Activated T-helper 2 cell treated with anti-CD3 and anti-CD28 coated beads, Interferon-gamma antibody, Interleukin-2, Interleukin-4, amounts not matched to agents 10 μg/mL and 5 μg/mL and 100 μg/mL, durations not matched to agents 14 hours and 24 hours and 36 hours (primary cell): ENCODE measurements at regions of chr12 and their contacts with region 1.

Region 1: GRCh38 chr12:56299853-56300643 is at the start of gene CS:
- DNase-seq: peak; percentile 98
- H3K4me3 Mint-ChIP-seq: peak within 1 kb of the TSS; percentile 95
- H3K27ac Mint-ChIP-seq: peak within 1 kb of the TSS; percentile 94
- H3K4me1 Mint-ChIP-seq: peaks cover 45% of the 10 kb centered on the region
- H3K27me3 Mint-ChIP-seq: no peaks in the 10 kb centered on the region
- total RNA-seq, gene CS: 250 and 253 TPM in 2 replicates

Region 2: DNA sequence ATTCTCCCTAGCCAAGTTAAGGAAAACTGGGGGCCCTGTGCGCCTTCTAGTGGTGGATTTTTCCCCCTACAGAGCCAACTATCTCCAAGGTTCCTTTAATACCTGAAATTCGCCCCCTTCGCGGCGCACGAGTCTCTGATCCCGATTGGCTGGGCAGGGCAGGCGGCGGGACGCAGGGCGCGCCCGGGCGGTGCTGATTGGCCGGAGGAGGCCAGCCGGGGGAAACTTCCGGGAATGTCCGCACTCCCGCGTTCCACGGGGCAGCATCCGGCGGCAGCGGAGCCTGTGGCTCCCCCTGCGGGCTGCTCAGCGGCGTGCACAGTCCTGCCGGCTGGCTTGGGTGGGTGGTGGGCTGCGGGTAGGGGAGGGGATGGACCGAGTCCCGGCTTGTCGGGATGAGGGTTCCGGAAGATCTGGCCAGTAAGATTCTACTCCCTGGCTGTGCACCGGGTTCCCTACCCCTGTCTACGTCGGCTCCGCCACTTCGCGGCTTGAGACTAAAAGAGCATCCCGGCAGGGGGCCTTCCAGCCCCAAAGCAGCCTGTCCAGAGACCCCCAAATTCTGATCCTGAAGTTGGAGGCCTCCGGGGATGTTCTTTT is 75.8 kb before region 1 on chr12 and contains the start of gene NABP2:
- intact Hi-C with region 1: loop called (anchors 2 kb)
- DNase-seq: peak; percentile 94
- H3K4me3 Mint-ChIP-seq: peak within 1 kb of the TSS; percentile 99
- H3K27ac Mint-ChIP-seq: peak within 1 kb of the TSS; percentile 76
- H3K4me1 Mint-ChIP-seq: peaks cover 41% of the 10 kb centered on the region
- H3K27me3 Mint-ChIP-seq: no peaks in the 10 kb centered on the region
- total RNA-seq, gene NABP2: 77.3 and 86.8 TPM in 2 replicates

Region 3: DNA sequence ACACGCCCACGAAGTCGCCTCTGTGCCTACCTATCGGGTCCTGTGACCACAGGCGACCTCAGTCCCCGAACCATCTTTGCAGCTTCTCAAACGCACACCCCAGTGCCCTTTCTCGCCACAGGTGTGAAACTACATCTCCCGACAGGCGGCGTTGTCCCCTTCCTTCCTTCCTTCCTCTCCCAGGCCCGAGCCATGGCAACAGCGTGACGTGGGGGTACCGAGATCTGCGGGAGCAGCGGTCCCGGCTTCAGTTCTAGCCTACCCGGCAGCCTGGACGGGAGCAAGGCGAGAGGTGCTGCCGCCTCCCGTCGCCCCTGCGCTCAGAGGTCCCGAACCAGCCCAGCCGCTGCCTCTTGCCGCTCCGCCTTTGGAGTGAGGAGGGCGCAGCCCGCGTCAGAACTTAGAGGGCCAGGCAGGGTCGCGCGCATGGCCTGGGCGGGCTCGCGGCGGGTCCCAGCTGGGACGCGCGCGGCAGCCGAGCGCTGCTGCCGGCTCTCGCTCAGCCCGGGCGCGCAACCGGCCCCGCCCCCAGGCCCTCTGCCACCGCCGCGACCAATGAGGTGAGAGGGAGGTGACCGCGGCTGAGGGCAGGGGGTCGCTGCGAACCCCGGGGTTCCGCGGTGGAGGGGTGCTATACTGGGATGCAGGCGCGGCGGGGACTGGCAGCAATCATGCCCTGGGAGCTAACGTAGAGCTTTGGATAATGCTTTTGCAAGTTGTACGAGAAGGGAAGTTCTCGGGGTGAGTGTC is 33.2 kb before region 1 on chr12 and contains the start of gene COQ10A:
- intact Hi-C with region 1: loop called (anchors 1 kb)
- DNase-seq: peak; percentile 85
- H3K4me3 Mint-ChIP-seq: peak within 1 kb of the TSS; percentile 96
- H3K27ac Mint-ChIP-seq: peak within 1 kb of the TSS; percentile 87
- H3K4me1 Mint-ChIP-seq: peaks cover 17% of the 10 kb centered on the region
- H3K27me3 Mint-ChIP-seq: no peaks in the 10 kb centered on the region
- total RNA-seq, gene COQ10A: 15.9 and 17.0 TPM in 2 replicates

Region 4: DNA sequence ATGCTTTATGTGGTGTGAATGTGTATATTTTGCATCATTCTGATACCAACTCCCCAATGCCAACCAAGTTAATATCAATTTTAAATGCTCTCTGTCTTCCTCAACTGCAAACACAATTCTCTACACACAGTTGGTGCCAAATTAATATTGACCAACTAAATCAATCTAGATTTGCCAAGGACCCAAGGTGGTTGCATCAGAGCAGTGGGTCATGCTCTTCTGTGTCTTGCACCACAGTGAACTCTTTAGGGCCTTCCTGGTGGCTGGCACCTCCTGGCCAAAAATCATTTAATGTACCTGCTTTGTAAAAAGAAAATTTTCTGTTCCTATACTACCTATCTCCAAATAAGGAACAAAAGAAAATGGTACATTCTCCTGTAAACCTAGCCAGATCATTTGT is 19.2 kb before region 1 on chr12:
- intact Hi-C with region 1: no loop called
- DNase-seq: no peak
- H3K4me3 Mint-ChIP-seq: no peak overlapping the region
- H3K27ac Mint-ChIP-seq: no peak overlapping the region
- H3K4me1 Mint-ChIP-seq: no peaks in the 10 kb centered on the region
- H3K27me3 Mint-ChIP-seq: no peaks in the 10 kb centered on the region

Region 5: DNA sequence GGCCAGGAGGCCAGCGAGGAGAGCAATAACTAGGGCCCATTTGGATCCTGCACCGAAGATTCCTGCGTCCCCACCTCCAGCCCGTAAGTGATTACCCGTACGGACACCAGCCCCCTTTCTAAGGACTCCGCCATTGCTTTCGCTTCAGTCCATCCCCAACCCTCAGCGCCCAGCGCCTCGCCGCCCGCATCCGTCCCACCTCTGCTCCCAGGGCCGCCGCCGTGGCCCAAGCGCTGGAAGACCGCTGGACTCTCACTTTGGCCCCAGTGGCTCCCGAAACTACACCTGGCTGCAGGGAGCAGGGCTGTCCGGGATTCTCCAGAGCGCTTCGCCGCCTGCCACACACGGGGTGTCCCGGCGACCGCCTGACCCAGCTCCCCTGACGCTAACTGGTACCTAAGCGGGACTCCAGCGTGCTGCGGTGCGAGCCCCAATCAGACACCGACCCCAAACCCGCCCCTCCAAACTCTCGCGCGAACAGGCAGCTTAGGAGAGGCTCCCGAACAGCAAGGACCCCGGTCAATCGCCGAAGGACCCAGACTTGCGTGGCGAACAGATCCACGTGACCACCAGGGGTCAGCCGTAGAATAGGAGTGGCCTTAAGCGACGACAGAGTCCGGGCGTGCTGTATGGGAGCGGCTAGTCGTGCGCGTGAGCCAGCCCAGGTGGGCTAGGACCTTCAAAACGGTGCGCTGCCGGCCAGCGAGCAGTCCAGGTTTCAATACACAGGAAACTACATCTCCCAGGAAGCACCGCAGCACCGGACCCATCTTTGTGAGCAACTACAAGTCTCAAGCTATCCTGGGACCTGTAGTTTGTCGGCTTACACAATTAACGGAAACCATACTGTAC is 15.8 kb after region 1 on chr12 and contains the start of gene CNPY2:
- intact Hi-C with region 1: loop called (anchors 1 kb)
- DNase-seq: peak; percentile 88
- H3K4me3 Mint-ChIP-seq: peak within 1 kb of the TSS; percentile 99
- H3K27ac Mint-ChIP-seq: peak within 1 kb of the TSS; percentile 98
- H3K4me1 Mint-ChIP-seq: peaks cover 6% of the 10 kb centered on the region
- H3K27me3 Mint-ChIP-seq: no peaks in the 10 kb centered on the region
- total RNA-seq, gene CNPY2: 160 and 165 TPM in 2 replicates

Region 6: DNA sequence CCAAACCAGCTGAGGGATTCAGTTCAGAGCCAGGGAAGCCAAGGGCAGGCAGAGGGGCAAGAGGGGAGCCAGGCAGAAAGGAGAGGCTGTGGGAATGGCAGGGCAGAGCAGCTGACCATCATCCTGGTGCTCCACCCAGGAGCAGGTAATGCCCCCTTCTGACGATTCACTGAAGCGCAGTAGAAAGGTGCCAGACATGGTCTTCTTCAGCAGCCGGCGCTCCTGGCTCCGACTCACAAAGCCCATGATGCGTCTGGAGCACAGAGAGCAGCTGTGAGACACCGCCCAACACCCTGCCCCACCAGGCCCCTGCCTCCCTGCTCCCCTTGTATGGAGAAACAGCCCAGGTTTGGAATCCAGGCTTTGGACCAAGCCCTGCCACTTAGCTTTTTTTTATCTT is 46.7 kb after region 1 on chr12:
- intact Hi-C with region 1: no loop called
- DNase-seq: no peak
- H3K4me3 Mint-ChIP-seq: no peak overlapping the region
- H3K27ac Mint-ChIP-seq: no peak overlapping the region
- H3K4me1 Mint-ChIP-seq: no peaks in the 10 kb centered on the region
- H3K27me3 Mint-ChIP-seq: no peaks in the 10 kb centered on the region

Region 7: DNA sequence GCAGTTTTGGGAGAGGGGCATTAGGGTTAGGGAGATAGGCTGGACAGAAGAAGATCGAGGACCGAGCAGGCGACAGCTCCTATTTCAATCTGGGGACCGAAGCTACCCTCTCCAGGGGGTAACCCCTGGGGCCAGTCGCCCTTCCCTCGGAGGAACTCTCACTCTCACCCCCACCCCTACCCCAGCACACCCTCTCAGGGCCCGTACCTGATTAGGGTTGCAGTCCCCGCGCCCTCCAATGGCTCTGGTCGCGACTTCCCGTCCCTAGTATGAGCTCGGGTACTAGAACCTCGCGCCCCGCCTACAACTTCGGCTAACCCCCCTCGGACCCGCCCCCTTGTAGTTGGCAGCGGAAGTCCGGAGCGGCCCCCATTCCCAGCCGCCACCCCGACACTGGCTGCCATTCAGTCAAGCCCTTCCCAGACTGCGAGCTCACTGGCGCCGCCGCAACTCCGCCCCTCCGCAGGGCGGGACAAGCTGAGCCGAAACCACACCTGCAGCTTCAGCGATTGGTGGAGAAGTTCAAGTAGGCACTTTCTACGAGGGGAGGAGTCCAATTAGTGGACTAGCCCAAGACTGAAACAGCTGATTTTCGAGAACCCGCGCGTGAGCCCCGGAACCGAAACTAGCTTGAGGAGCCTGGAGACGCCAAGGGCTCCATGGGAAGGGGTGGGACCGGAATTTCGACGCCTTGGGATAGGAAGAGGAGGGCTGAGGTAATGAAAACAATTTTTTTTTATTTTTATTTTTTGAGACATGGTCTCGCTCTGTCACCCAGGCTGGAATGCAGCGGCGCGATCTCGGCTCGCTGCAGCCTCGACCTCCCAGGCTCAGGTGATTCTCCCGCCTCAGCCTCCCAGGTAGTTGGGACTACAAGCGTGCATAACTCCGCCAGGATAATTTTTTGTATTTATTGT is 60.1 kb after region 1 on chr12 and contains the start of gene STAT2:
- intact Hi-C with region 1: loop called (anchors 1 kb)
- DNase-seq: peak; percentile 100
- H3K4me3 Mint-ChIP-seq: peak within 1 kb of the TSS; percentile 89
- H3K27ac Mint-ChIP-seq: peak within 1 kb of the TSS; percentile 90
- H3K4me1 Mint-ChIP-seq: peaks cover 24% of the 10 kb centered on the region
- H3K27me3 Mint-ChIP-seq: no peaks in the 10 kb centered on the region
- total RNA-seq, gene STAT2: 70.3 and 75.0 TPM in 2 replicates

Region 8: DNA sequence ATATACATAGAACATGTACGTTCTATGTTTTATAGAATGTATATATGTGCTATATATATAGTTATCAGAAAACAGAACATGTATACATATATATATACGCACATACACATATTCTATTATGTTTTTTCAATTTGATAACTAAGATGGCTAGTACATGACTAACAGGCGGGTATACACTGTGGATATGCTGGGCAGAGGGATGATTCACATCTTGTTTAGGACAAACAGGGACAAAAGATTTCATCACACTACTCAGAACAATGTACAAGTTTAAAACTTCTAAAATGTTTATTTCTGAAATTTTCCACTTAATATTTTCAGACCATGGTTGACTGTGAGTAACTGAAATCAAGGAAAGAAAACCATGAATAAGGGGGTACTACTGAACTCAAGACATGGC is 131.8 kb after region 1 on chr12:
- intact Hi-C with region 1: no loop called
- DNase-seq: no peak
- H3K4me3 Mint-ChIP-seq: no peak overlapping the region
- H3K27ac Mint-ChIP-seq: no peak overlapping the region
- H3K4me1 Mint-ChIP-seq: no peaks in the 10 kb centered on the region
- H3K27me3 Mint-ChIP-seq: no peaks in the 10 kb centered on the region

Region 9: GRCh38 chr12:56448860-56449621 is 149.0 kb after region 1 on chr12 and contains the start of gene TIMELESS:
- intact Hi-C with region 1: loop called (anchors 2 kb)
- DNase-seq: peak; percentile 88
- H3K4me3 Mint-ChIP-seq: peak within 1 kb of the TSS; percentile 86
- H3K27ac Mint-ChIP-seq: peak within 1 kb of the TSS; percentile 86
- H3K4me1 Mint-ChIP-seq: peaks cover 24% of the 10 kb centered on the region
- H3K27me3 Mint-ChIP-seq: no peaks in the 10 kb centered on the region
- total RNA-seq, gene TIMELESS: 43.7 and 45.6 TPM in 2 replicates

Region 10: DNA sequence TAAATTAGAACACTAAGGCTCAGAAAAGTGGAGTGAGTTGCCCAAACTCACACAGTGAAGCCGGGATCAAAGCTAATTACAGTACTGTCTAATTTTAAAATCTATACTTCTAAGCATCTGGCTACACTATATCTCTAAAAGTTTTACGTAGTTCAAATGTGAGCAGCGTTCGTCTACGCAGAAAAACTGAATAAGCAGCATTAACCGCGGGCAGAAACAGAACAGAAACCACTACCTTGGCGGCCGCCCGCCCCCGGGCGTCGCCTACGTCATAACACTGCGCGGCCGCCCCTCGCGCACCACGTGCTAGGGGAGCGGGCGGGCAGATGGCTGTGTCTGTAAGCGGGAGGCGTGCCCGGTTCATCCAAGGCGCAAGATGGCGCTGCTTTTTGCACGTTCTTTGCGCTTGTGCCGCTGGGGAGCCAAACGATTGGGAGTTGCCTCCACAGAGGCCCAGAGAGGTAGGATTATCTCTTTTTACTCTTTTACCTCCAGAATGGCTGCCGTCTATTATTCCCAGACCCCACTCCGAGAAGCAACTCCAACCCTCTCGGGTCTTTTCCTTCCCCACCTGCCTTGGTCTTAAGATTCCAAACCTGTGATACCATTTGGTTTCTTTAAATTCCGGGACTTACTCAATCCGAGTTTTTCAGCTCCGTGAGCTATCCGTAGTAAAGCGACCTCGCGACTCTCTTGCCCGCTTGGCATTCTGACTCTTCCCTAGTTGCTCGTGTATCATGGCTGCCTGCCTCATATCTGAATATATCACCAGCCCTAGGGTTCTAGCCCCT is 168.4 kb after region 1 on chr12 and contains the start of gene SPRYD4:
- intact Hi-C with region 1: loop called (anchors 1 kb)
- DNase-seq: peak; percentile 93
- H3K4me3 Mint-ChIP-seq: peak within 1 kb of the TSS; percentile 98
- H3K27ac Mint-ChIP-seq: peak within 1 kb of the TSS; percentile 98
- H3K4me1 Mint-ChIP-seq: peaks cover 18% of the 10 kb centered on the region
- H3K27me3 Mint-ChIP-seq: no peaks in the 10 kb centered on the region
- total RNA-seq, gene SPRYD4: 4.4 and 4.5 TPM in 2 replicates

Region 11: GRCh38 chr12:56529290-56530055 is 229.4 kb after region 1 on chr12:
- intact Hi-C with region 1: no loop called
- DNase-seq: no peak
- H3K4me3 Mint-ChIP-seq: no peak overlapping the region
- H3K27ac Mint-ChIP-seq: no peak overlapping the region
- H3K4me1 Mint-ChIP-seq: no peaks in the 10 kb centered on the region
- H3K27me3 Mint-ChIP-seq: no peaks in the 10 kb centered on the region